ENCODE measurements at regions of chr1 and their contacts with region 1.

Region 1: DNA sequence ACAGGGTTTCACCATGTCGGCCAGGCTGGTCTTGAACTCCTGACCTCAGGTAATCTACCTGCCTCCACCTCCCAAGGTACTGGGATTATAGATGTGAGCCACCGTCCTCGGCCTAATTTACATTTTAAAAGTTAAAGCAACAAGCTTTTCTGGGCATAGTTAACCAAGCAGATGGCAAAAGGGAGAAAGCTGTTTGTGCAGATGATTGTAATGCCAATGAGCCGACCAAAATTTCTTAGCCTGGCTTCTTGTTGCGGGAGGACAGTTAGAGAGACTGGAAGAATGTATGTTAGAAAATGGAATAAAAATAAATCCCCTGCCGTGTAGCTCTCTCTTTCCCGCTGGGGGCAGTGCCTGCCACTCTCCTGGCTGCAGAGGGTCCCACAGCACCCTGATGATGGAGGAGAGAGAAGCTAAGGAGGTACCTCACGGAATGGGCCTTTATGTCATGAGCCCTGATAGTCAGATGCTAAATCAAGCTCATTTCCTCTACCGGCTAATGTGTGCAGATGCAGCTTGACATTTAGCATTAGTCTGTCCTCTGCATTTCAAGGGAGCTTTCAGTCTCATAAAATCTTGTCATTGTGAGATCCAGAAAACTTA is 87.2 kb downstream of the HHAT start:
- DNase-seq: no peak
- H3K4me3 ChIP-seq: no peak overlapping the region
- CTCF ChIP-seq: no peak

Region 2: GRCh38 chr1:210400043-210400840 is 15.7 kb before region 1 on chr1:
- CTCF ChIA-PET with region 1: interaction called, 34 read pairs
- POLR2A ChIA-PET with region 1: no interaction called
- DNase-seq: peak; percentile 38
- H3K4me3 ChIP-seq: no peak overlapping the region
- CTCF ChIP-seq: peak; percentile 86

Region 3: GRCh38 chr1:210428696-210429095 is 12.7 kb after region 1 on chr1:
- CTCF ChIA-PET with region 1: interaction called, 12 read pairs
- POLR2A ChIA-PET with region 1: no interaction called
- DNase-seq: no peak
- H3K4me3 ChIP-seq: no peak overlapping the region
- CTCF ChIP-seq: no peak

Region 4: DNA sequence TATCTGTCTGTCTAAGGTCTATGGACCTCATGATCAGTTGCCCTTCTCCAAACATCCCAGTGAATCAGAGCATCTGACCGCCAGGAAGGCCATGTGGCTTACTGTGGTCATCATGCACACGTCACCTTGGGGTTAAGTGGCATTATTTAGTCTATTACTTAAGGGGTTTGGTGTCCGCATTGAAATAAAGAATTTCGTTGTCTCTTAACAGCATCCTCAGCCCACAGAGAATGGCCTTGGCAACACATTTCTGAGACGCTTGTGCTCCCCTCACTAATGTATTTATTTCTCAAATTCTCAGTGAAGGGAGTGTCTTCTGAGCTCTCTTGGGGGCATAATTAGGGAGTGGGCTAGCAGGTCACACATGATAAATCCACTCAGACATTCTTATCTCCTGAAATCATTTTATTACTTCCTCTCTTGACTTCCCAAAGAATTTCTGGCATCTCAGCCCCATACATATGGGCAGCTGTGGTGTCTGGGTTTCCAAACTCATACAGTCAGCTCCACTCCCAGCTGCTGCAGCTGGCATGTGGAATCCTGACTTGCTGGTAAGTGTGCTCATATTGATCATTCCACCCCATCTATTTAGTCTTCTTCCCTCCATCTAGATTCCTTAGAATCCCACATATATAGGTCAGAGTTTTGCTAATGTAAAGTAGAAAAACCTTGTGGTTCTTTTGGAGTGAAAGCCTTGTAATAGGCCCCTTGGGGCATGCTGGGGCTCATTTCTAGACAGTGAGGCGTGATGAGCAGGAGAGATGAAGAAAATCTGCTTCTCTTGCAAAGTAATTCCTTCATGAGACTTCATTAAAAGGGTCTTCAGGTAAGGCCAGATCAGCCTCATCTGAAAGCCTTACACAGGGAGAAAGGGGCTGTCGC is 23.2 kb after region 1 on chr1:
- CTCF ChIA-PET with region 1: interaction called, 9 read pairs
- POLR2A ChIA-PET with region 1: interaction called, 15 read pairs
- DNase-seq: peak; percentile 100
- H3K4me3 ChIP-seq: no peak overlapping the region
- CTCF ChIP-seq: no peak

Region 5: DNA sequence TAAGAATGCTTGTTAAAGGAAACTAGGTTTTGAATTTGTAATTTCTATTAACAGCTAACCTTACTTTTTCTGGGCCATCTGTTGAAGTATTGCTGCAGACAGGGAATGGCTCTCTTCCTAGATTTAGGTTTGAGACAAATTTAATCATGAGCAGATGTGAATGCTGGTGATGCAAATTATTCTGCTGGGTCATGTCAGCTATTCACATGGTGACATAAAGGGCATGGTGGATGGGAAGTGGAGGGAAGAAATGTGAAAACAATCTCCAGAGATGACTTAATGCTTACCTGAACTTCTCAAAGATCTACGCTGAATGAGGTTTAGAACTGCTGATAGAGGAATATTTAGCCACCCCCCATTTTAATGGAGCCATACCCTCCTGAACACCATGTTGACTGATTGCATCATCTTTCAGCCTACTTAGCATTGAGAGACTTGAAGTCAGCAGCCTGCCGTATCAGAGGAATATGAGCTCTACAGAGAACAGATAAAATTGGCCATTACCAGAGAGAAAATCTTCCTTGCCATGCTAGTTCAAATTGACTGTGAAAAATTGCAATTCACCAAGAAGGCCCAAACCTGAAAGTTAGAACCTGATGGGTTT is 51.6 kb after region 1 on chr1:
- CTCF ChIA-PET with region 1: no interaction called
- POLR2A ChIA-PET with region 1: no interaction called
- DNase-seq: peak; percentile 9
- H3K4me3 ChIP-seq: no peak overlapping the region
- CTCF ChIP-seq: no peak

Measured in AG04449 (cell line).